AG04450 (cell line): ENCODE measurements at regions of chr9 and their contacts with region 1.

Region 1: GRCh38 chr9:114321759-114322158 is 1.1 kb upstream of the ORM1 start:
- DNase-seq: no peak
- H3K4me3 ChIP-seq: no peak overlapping the region
- H3K27ac ChIP-seq: peak overlapping the region; percentile 31
- H3K27me3 ChIP-seq: no peaks in the 10 kb centered on the region
- CTCF ChIP-seq: no peak

Region 2: GRCh38 chr9:114339130-114339908 is 17.6 kb after region 1 on chr9:
- CTCF ChIA-PET with region 1: interaction called, 13 read pairs
- POLR2A ChIA-PET with region 1: no interaction called
- DNase-seq: no peak
- H3K4me3 ChIP-seq: no peak overlapping the region
- H3K27ac ChIP-seq: no peak overlapping the region
- H3K27me3 ChIP-seq: no peaks in the 10 kb centered on the region
- CTCF ChIP-seq: peak; percentile 93